ENCODE measurements at regions of chr11 and their contacts with region 1.

Region 1: GRCh38 chr11:68370211-68371111 is 58.1 kb downstream of the LRP5 start:
- DNase-seq: no peak
- ATAC-seq: peak in 2 of 4 donors; percentile 6 to 7
- H3K4me3 ChIP-seq: no peak overlapping the region
- H3K27ac ChIP-seq: no peak overlapping the region
- H3K4me1 ChIP-seq: peaks cover 0 to 34% (median 17%) of the 10 kb centered on the region in 4 donors
- H3K27me3 ChIP-seq: no peaks in the 10 kb centered on the region
- CTCF ChIP-seq: no peak
- POLR2A ChIP-seq: no peak

Region 2: DNA sequence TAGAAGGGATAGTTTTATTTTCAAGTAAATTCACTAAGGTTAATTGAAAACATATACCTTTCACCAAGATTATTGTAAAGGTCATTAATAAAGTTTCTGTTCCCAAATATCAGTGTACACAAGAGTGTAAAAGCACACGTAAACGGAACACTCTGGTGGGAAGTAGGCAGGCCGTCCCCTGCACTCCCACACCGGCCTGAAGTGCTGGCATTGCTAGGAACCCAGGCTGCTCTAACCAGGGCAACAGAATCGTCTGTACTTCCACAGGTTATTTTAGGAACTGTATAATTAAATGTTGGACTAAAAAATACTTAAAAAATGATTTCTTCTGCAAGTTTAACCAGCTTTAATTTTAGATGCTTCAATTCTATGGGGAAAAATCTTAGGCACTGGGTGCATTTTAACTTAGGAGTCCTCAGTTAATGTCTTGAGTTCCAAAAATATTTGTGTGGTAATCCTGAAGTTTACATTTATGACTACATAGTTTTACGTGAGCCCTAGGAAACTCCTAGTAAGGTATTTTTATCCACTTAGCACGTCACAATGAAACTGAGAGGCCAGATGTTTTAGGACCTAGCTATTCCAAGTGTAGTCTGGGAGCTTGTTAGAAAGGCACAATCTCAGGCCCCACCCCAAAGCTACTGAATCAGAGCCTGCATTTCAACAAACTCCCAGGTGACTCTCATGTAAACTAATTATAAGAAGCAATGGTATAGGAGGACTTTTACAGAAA is 188.6 kb before region 1 on chr11:
- intact Hi-C with region 1: no loop called
- DNase-seq: no peak
- ATAC-seq: no peak
- H3K4me3 ChIP-seq: no peak overlapping the region
- H3K27ac ChIP-seq: no peak overlapping the region
- H3K4me1 ChIP-seq: peaks cover 0 to 5% (median 2%) of the 10 kb centered on the region in 4 donors
- H3K27me3 ChIP-seq: no peaks in the 10 kb centered on the region
- CTCF ChIP-seq: no peak
- POLR2A ChIP-seq: no peak

Region 3: GRCh38 chr11:68328374-68329091 is 41.9 kb before region 1 on chr11:
- intact Hi-C with region 1: loop called in 1 of 2 experiments (anchors 10 kb)
- DNase-seq: peak in 1 of 3 donors; percentile 46
- ATAC-seq: peak in 3 of 4 donors; percentile 3 to 15 (median 6)
- H3K4me3 ChIP-seq: no peak overlapping the region
- H3K27ac ChIP-seq: peak overlapping the region in 1 of 3 donors; percentile 82
- H3K4me1 ChIP-seq: peaks cover 0 to 93% (median 49%) of the 10 kb centered on the region in 4 donors
- H3K27me3 ChIP-seq: no peaks in the 10 kb centered on the region
- CTCF ChIP-seq: no peak
- POLR2A ChIP-seq: no peak

Measured in right lobe of liver (tissue), 6 donors.